CD14-positive monocyte (primary cell): ENCODE measurements at regions of chr2 and their contacts with region 1.

Region 1: DNA sequence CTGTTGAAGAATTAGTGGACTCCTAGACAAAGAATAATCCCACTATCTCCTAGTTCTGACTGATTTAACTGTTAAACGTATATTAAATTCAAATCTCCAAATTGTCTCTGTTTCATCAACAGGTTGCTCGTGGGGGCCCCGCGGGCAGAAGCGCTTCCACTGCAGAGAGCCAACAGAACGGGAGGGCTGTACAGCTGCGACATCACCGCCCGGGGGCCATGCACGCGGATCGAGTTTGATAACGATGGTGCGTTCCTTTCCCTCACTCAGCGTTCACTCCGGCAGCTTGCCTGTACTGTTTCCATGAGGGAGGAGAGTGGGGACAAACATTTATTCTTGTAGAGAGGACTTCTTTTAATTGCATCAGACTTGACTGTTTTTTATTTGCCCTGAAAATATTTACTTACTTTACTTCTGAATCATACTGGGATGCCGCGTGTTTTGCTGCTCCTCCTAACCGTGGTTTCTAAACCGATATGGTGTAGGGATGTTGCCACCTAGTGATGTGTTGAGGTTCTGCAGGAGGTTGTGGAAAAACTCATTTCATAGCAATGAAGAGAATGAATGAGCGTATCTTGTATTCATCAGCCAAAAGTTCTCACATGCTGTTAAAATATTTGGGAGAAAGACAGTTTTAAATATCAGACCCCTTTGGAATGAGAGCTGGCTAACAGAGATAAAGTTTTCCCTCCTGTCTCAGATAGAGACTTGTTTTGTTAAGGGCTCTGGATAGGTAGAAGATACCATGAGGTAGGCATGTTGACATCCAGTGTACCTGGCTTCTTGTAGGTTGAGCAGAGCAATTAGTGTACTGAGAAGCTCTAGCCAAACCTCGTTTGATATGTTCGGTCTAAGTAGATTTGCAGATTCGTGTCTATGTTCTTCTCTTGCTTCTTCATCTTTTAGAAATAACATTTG is 38.3 kb downstream of the ITGA6 start:
- DNase-seq: peak; percentile 51 to 65 (median 60)
- H3K4me3 ChIP-seq: no peak overlapping the region
- H3K4me3 Mint-ChIP-seq: no peak overlapping the region
- H3K27ac ChIP-seq: no peak overlapping the region
- H3K27ac Mint-ChIP-seq: no peak overlapping the region
- H3K4me1 ChIP-seq: peaks cover 26 to 32% of the 10 kb centered on the region in 2 donors
- H3K4me1 Mint-ChIP-seq: peaks cover 33% of the 10 kb centered on the region
- H3K27me3 ChIP-seq: no peaks in the 10 kb centered on the region
- H3K27me3 Mint-ChIP-seq: peaks cover 0 to 12% (median 1%) of the 10 kb centered on the region in 3 donors
- CTCF ChIP-seq: peak; percentile 89

Region 2: GRCh38 chr2:171574149-171574795 is 891.4 kb before region 1 on chr2:
- intact Hi-C with region 1: loop called in 1 of 2 experiments (anchors 5 kb)
- DNase-seq: peak; percentile 71 to 80 (median 79)
- H3K4me3 ChIP-seq: no peak overlapping the region
- H3K4me3 Mint-ChIP-seq: peak overlapping the region in 1 of 2 donors; percentile 63
- H3K27ac ChIP-seq: no peak overlapping the region
- H3K27ac Mint-ChIP-seq: no peak overlapping the region
- H3K4me1 ChIP-seq: no peaks in the 10 kb centered on the region
- H3K4me1 Mint-ChIP-seq: peaks cover 4% of the 10 kb centered on the region
- H3K27me3 ChIP-seq: no peaks in the 10 kb centered on the region
- H3K27me3 Mint-ChIP-seq: peaks cover 4 to 6% (median 4%) of the 10 kb centered on the region in 3 donors
- CTCF ChIP-seq: peak; percentile 96

Region 3: DNA sequence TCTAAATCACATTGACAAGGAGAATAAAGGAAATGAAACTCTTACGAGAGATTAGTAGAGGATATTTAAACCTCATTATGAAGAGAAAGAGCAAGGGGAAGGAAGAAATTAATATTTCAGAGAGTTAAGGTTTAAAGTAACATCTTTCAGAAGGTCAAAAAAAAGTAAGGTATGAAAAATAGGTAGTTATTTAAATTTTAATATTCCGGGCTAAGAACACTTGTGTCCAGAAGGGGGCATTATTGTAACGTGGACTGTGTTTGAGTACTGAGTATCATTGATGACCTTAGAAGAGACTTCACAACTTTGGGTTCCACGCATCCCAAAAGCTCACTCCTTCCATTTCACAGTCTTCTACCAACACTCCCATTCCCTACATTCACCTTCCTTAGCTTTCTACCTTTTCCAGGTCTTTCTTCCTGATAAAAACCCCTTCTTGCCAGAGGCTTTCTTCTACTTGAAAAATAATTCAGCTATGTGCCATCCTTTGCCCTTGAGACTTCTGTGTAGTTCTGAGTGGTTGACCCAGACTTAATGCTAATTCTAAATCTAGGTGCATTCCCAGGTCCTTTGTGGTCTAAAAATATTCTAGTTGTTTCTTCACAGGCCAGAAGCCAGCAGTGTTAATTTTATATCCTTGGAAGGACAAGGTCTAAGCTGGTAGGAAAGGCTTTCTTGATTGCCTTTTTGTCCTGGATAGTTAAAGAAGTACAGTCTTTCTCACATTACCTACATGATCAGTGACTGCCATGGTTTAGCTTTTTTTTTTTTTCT is 761.9 kb before region 1 on chr2:
- intact Hi-C with region 1: loop called in 1 of 2 experiments (anchors 10 kb)
- DNase-seq: peak; percentile 1 to 21 (median 15)
- H3K4me3 ChIP-seq: no peak overlapping the region
- H3K4me3 Mint-ChIP-seq: no peak overlapping the region
- H3K27ac ChIP-seq: no peak overlapping the region
- H3K27ac Mint-ChIP-seq: peak overlapping the region in 1 of 7 donors; percentile 61
- H3K4me1 ChIP-seq: no peaks in the 10 kb centered on the region
- H3K4me1 Mint-ChIP-seq: peaks cover 11% of the 10 kb centered on the region
- H3K27me3 ChIP-seq: no peaks in the 10 kb centered on the region
- H3K27me3 Mint-ChIP-seq: no peaks in the 10 kb centered on the region
- CTCF ChIP-seq: no peak

Region 4: GRCh38 chr2:172172513-172173173 is 293.0 kb before region 1 on chr2:
- intact Hi-C with region 1: loop called (anchors 2 kb)
- DNase-seq: peak; percentile 44 to 64 (median 54)
- H3K4me3 ChIP-seq: peak overlapping the region; percentile 73 to 88 (median 79)
- H3K4me3 Mint-ChIP-seq: peak overlapping the region; percentile 76 to 78
- H3K27ac ChIP-seq: no peak overlapping the region
- H3K27ac Mint-ChIP-seq: peak overlapping the region in 1 of 7 donors; percentile 66
- H3K4me1 ChIP-seq: peaks cover 5 to 6% of the 10 kb centered on the region in 2 donors
- H3K4me1 Mint-ChIP-seq: peaks cover 24% of the 10 kb centered on the region
- H3K27me3 ChIP-seq: peaks cover 0 to 8% of the 10 kb centered on the region in 2 donors
- H3K27me3 Mint-ChIP-seq: peaks cover 0 to 7% (median 3%) of the 10 kb centered on the region in 3 donors
- CTCF ChIP-seq: peak; percentile 92